H1 (cell line): ENCODE measurements at regions of chr2 and their contacts with region 1.

Region 1: GRCh38 chr2:46555011-46555410 is 75.6 kb downstream of the TMEM247 start:
- DNase-seq: peak in 1 of 2 experiments; percentile 74
- H3K4me3 ChIP-seq: peak overlapping the region in 2 of 4 experiments; percentile 10 to 26; a peak in 2 of 8 replicates
- H3K27ac ChIP-seq: no peak overlapping the region
- H3K4me1 ChIP-seq: peaks cover 4 to 12% (median 9%) of the 10 kb centered on the region in 4 experiments
- H3K27me3 ChIP-seq: no peaks in the 10 kb centered on the region
- CTCF ChIP-seq: peak; percentile 63 to 78 (median 64)
- EP300 ChIP-seq: no peak
- POLR2A ChIP-seq: no peak
- RAD21 ChIP-seq: peak; percentile 40 to 50; a peak in 3 of 4 replicates

Region 2: DNA sequence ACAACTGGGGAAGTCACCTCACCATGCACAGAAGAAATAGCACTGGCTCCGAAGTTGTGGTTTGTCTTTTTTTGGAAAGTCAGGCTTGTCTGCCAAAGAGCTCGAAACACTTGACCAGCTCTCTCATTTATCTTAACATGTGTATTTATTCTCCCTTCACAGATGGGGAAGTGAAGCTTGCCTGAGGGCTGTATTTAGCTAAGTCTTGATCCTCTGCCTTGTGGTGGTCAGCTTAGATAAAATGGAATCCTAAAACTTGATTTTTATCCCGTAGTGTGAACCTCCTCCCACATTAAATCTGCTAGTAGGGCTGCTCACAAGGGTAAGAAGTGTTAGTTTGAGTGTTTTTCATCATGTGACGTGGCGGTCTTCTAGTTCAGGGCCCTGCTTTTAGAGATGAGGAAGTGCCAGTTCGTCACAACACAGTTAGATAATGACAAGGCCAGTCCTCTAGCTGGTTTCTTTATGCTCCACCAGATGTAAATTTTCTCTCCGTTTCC is 14.1 kb after region 1 on chr2:
- CTCF ChIA-PET with region 1: interaction called, 35 read pairs
- POLR2A ChIA-PET with region 1: interaction called, 3 read pairs
- DNase-seq: no peak
- H3K4me3 ChIP-seq: no peak overlapping the region
- H3K27ac ChIP-seq: no peak overlapping the region
- H3K4me1 ChIP-seq: no peaks in the 10 kb centered on the region
- H3K27me3 ChIP-seq: no peaks in the 10 kb centered on the region
- CTCF ChIP-seq: no peak
- EP300 ChIP-seq: no peak
- POLR2A ChIP-seq: no peak
- RAD21 ChIP-seq: no peak

Region 3: GRCh38 chr2:46589358-46589757 is 34.3 kb after region 1 on chr2:
- CTCF ChIA-PET with region 1: interaction called, 14 read pairs
- POLR2A ChIA-PET with region 1: interaction called, 4 read pairs
- DNase-seq: no peak
- H3K4me3 ChIP-seq: no peak overlapping the region
- H3K27ac ChIP-seq: no peak overlapping the region
- H3K4me1 ChIP-seq: no peaks in the 10 kb centered on the region
- H3K27me3 ChIP-seq: no peaks in the 10 kb centered on the region
- CTCF ChIP-seq: no peak
- EP300 ChIP-seq: no peak
- POLR2A ChIP-seq: no peak
- RAD21 ChIP-seq: no peak

Region 4: DNA sequence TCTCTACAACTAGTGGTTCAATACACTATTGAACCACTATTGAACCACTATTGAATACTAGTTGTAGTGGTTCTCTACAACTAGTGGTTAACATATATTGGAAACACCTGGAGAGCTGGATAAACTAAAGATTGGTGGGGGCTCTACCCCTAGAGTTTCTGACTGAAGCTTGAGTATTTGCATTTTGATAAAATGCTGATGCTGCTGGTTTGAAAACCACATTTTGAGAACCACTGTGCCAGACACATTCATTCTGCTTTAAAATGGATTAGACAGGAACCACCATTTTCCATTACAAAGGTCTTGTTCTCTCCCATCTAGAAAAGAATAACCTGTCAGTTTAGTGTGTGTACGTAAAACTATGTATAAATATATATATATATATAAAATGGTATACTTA is 57.7 kb after region 1 on chr2:
- CTCF ChIA-PET with region 1: interaction called, 11 read pairs
- POLR2A ChIA-PET with region 1: no interaction called
- DNase-seq: no peak
- H3K4me3 ChIP-seq: no peak overlapping the region
- H3K27ac ChIP-seq: no peak overlapping the region
- H3K4me1 ChIP-seq: peaks cover 0 to 2% (median 0%) of the 10 kb centered on the region in 4 experiments; a peak in 2 of 7 replicates
- H3K27me3 ChIP-seq: no peaks in the 10 kb centered on the region
- CTCF ChIP-seq: no peak
- EP300 ChIP-seq: no peak
- POLR2A ChIP-seq: no peak
- RAD21 ChIP-seq: no peak

Region 5: GRCh38 chr2:46657042-46657504 is 102.1 kb after region 1 on chr2:
- CTCF ChIA-PET with region 1: no interaction called
- POLR2A ChIA-PET with region 1: no interaction called
- DNase-seq: no peak
- H3K4me3 ChIP-seq: no peak overlapping the region
- H3K27ac ChIP-seq: no peak overlapping the region
- H3K4me1 ChIP-seq: no peaks in the 10 kb centered on the region
- H3K27me3 ChIP-seq: no peaks in the 10 kb centered on the region
- CTCF ChIP-seq: peak in 2 of 3 experiments; percentile 77 to 78; a peak in 3 of 4 replicates
- EP300 ChIP-seq: no peak
- POLR2A ChIP-seq: no peak
- RAD21 ChIP-seq: peak; percentile 69 to 77